Brain microvascular endothelial cell (primary cell): ENCODE measurements at regions of chr3 and their contacts with region 1.

Region 1: GRCh38 chr3:124761250-124761796 is 31.1 kb downstream of the UMPS start:
- DNase-seq: peak; percentile 84
- H3K4me3 ChIP-seq: no peak overlapping the region
- H3K27ac ChIP-seq: no peak overlapping the region
- H3K27me3 ChIP-seq: no peaks in the 10 kb centered on the region
- CTCF ChIP-seq: peak; percentile 95

Region 2: GRCh38 chr3:124584552-124585391 is 176.6 kb before region 1 on chr3:
- in situ Hi-C with region 1: no loop called
- DNase-seq: peak; percentile 31
- H3K4me3 ChIP-seq: peak overlapping the region; percentile 57
- H3K27ac ChIP-seq: no peak overlapping the region
- H3K27me3 ChIP-seq: peaks cover 3% of the 10 kb centered on the region
- CTCF ChIP-seq: no peak

Region 3: GRCh38 chr3:124887177-124887931 is 126.0 kb after region 1 on chr3 and contains the start of gene ITGB5:
- in situ Hi-C with region 1: loop called (anchors 25 kb)
- DNase-seq: peak; percentile 70
- H3K4me3 ChIP-seq: peak within 1 kb of the TSS; percentile 79
- H3K27ac ChIP-seq: peak within 1 kb of the TSS; percentile 87
- H3K27me3 ChIP-seq: no peaks in the 10 kb centered on the region
- CTCF ChIP-seq: no peak